IMR-90 (cell line): ENCODE measurements at regions of chr6 and their contacts with region 1.

Region 1: GRCh38 chr6:54916862-54917261 is 70.3 kb downstream of the FAM83B start:
- DNase-seq: peak; percentile 75
- ATAC-seq: peak; percentile 81
- H3K4me3 ChIP-seq: no peak overlapping the region
- H3K27ac ChIP-seq: no peak overlapping the region
- H3K4me1 ChIP-seq: no peaks in the 10 kb centered on the region; the same call in 1 of the 2 replicates
- H3K27me3 ChIP-seq: no peaks in the 10 kb centered on the region
- CTCF ChIP-seq: no peak
- POLR2A ChIP-seq: no peak
- RAD21 ChIP-seq: no peak

Region 2: DNA sequence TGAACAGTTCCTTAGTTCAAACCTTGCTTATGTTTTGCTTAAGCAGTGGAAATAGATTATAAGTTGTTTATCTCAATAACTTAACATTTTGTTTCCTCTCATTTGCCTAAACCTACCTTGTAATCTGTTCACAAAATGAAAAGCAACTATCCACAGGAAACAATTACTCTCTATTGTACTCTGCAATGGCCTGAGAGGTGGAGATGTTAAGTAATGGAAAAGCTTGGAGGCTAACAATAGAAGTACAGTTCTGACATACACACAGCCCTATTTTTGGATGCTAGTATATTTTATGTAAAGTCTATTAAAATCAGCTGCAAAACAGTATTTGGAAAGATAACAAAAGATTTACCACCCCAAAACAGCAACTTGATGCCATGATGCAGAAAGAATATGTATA is 526.5 kb before region 1 on chr6:
- CTCF ChIA-PET with region 1: no interaction called
- POLR2A ChIA-PET with region 1: no interaction called
- dilution Hi-C with region 1: no loop called
- in situ Hi-C with region 1: no loop called
- intact Hi-C with region 1: loop called (anchors 5 kb)
- DNase-seq: no peak
- ATAC-seq: no peak
- H3K4me3 ChIP-seq: no peak overlapping the region
- H3K27ac ChIP-seq: no peak overlapping the region
- H3K4me1 ChIP-seq: no peaks in the 10 kb centered on the region
- H3K27me3 ChIP-seq: no peaks in the 10 kb centered on the region
- CTCF ChIP-seq: no peak
- POLR2A ChIP-seq: no peak
- RAD21 ChIP-seq: no peak

Region 3: DNA sequence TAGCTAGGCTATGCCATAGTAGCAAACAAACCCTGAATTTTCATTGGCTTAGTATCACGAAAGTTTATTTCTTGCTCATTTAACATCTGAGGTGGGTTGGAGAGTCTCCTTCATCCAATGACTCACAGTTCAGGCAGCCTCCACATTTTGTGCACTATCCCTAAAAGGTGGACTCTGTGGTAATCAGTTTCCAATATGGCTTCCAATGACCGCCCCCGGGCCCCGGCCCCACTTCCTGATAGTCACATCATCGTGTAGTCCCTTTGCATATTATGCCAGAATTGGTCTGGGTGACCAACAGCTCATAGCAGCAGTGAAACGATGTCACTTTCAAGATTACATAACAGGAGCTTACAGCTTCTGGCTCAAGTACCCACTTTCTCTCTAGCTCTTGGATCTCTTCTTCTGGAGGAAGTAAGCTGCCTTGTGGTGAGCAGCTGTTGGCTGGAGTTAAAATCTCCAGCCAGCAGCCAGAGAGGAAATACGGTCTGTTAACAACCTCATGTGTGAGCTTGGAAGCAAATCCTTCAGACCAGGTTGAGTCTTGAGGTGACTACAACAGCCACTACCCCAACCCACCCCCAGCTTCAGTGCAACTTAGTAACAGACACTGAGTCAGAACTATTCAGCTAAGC is 265.3 kb after region 1 on chr6:
- CTCF ChIA-PET with region 1: no interaction called
- POLR2A ChIA-PET with region 1: no interaction called
- dilution Hi-C with region 1: no loop called
- in situ Hi-C with region 1: no loop called
- intact Hi-C with region 1: no loop called
- DNase-seq: no peak
- ATAC-seq: no peak
- H3K4me3 ChIP-seq: no peak overlapping the region
- H3K27ac ChIP-seq: no peak overlapping the region
- H3K4me1 ChIP-seq: no peaks in the 10 kb centered on the region
- H3K27me3 ChIP-seq: no peaks in the 10 kb centered on the region
- CTCF ChIP-seq: no peak
- POLR2A ChIP-seq: no peak
- RAD21 ChIP-seq: no peak